Endothelial cell of umbilical vein (primary cell): ENCODE measurements at regions of chr15 and their contacts with region 1.

Region 1: DNA sequence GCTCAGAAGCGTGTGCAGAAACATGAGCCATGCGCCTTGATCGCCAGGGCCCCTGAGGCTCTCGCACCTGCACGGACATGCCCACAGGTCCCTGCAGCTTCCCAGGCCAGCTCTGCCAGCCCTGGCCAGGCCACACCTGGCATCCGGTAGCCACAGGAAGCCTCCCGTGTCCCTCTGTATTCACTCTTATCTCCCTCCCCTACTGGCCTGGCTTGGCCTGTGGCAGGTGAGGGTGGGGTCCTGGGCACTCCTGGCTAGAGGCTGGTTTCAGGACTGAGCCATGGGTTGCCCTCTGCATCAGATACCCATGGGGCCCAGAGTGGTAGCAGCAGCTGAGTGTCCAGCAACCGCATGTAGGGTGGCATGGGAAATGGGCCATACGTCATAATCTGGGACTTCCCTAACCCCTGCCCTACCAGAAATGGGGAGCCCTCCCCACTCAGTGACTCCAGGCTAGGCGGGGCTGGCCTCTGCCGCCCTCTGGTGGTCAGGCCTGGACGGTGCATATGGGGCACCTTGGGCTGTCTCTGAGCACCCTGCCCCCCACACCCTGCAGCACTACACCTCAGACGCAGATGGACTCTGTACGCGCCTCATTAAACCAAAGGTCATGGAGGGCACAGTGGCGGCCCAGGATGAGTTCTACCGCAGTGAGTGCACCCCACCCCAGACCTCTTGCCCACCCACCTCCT is 12.6 kb upstream of the LMAN1L start:
- DNase-seq: peak; percentile 52
- H3K4me3 ChIP-seq: no peak overlapping the region
- H3K27ac ChIP-seq: no peak overlapping the region
- H3K4me1 ChIP-seq: no peaks in the 10 kb centered on the region
- H3K27me3 ChIP-seq: no peaks in the 10 kb centered on the region
- CTCF ChIP-seq: peak; percentile 93 to 98
- POLR2A ChIP-seq: no peak

Region 2: DNA sequence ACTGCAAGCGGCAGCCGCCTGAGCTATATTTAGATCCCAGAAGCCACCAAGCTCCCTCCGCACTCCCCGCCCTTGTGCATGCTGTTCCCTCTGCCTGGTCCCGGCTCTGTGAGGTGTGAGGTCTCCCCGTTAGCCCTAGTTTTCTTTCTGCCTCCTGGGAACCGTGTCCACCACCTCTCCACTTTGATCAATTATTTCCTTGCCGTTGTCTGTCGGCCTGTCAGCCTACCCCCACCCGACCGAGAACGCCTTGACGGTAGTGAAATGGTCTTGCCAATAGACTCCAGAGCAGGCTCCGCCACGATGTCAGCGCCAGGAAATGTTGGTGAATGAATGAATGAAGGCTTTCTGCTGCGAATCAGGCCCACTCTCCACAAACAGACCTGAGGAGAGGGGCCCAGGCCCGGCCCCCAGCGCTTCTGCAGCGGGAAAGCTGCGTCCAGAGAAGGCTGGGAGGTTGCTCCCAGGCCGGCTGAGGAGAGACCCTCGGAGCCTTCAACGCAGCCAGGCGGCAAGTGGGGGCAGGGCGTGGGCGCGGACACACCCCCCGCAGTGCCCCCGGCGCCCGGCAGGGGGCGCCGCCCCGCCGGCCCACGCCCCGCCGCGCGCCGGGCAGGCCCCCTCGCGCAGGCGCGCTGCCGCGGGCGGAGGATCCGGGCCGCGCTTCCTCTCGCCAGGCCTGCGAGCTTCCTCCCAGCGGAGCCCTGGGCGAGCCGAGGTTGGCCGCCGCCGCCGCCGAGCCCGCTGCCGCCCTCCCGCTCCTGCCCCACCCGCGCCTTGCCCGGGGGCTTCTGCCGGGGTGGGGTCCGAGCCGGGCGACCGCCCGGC is 18.4 kb before region 1 on chr15 and contains the start of gene CSK:
- CTCF ChIA-PET with region 1: interaction called, 22 read pairs
- POLR2A ChIA-PET with region 1: no interaction called
- dilution Hi-C with region 1: no loop called
- intact Hi-C with region 1: loop called (anchors 1 kb)
- DNase-seq: peak; percentile 53
- H3K4me3 ChIP-seq: peak within 1 kb of the TSS; percentile 88 to 94 (median 90)
- H3K27ac ChIP-seq: peak within 1 kb of the TSS; percentile 62
- H3K4me1 ChIP-seq: peaks cover 37% of the 10 kb centered on the region
- H3K27me3 ChIP-seq: no peaks in the 10 kb centered on the region
- CTCF ChIP-seq: peak; percentile 52 to 65
- POLR2A ChIP-seq: peak; percentile 67
- total RNA-seq, gene CSK: 89.1 and 104 TPM in 2 replicates

Region 3: GRCh38 chr15:74787251-74788041 is 12.6 kb before region 1 on chr15:
- CTCF ChIA-PET with region 1: interaction called, 22 read pairs
- POLR2A ChIA-PET with region 1: no interaction called
- dilution Hi-C with region 1: no loop called
- intact Hi-C with region 1: loop called (anchors 1 kb)
- DNase-seq: no peak
- H3K4me3 ChIP-seq: no peak overlapping the region
- H3K27ac ChIP-seq: no peak overlapping the region
- H3K4me1 ChIP-seq: peaks cover 18% of the 10 kb centered on the region
- H3K27me3 ChIP-seq: no peaks in the 10 kb centered on the region
- CTCF ChIP-seq: peak; percentile 46 to 54
- POLR2A ChIP-seq: no peak

Region 4: DNA sequence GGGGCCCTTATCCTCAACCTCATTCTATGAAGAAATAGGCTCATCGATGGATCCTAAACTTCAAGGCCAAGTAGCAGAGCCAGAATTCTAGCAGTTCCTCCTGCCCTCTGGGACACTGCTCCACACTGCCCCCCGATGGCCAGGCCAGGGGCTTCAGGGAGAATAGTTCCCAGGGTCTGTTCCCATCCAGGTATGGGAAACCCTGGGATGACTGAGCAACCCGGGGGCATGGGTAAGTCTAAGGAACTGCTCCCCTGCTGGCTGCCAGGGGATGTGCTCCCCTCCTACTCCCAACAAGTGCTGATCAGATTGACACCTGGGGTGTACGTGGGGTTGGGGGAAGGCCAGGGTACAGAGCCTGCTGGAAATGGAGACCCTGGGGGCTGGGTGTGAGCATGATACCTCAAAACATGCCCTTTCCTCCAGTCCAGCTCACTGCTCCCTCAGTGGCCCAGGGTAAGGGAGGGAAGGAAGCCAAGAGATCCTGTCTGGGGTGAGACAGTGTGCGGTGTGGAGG is 35.4 kb after region 1 on chr15:
- CTCF ChIA-PET with region 1: interaction called, 3 read pairs
- POLR2A ChIA-PET with region 1: no interaction called
- dilution Hi-C with region 1: no loop called
- intact Hi-C with region 1: loop called (anchors 2 kb)
- DNase-seq: peak; percentile 51
- H3K4me3 ChIP-seq: no peak overlapping the region
- H3K27ac ChIP-seq: no peak overlapping the region
- H3K4me1 ChIP-seq: no peaks in the 10 kb centered on the region
- H3K27me3 ChIP-seq: no peaks in the 10 kb centered on the region
- CTCF ChIP-seq: peak; percentile 86 to 87
- POLR2A ChIP-seq: no peak